HEK293 (cell line): ENCODE measurements at regions of chr18 and their contacts with region 1.

Region 1: GRCh38 chr18:23703057-23703986 is 14.1 kb downstream of the LAMA3 start:
- H3K4me3 ChIP-seq: no peak overlapping the region
- H3K27ac ChIP-seq: no peak overlapping the region
- H3K4me1 ChIP-seq: no peaks in the 10 kb centered on the region
- CTCF ChIP-seq: peak; percentile 65; the same call in 1 of the 2 replicates

Region 2: DNA sequence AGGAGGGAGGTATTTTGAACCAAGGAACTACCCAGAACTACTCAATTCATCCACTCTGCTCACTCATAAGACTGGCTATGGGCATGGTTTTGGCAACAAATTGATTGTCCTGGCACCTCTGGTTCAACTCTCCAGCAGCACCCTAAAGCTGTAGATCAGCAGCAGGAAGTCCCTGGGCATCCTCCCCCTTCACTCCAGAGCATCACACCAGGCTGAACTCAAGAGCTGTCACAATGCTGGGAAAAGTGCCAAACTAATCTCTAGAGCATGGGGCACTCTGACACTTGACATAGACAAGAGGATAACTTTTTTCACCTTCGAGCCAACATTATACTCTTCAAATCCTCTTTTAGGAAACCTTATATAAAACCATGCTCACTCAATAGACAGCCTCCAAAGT is 924.3 kb before region 1 on chr18:
- CTCF ChIA-PET with region 1: interaction called, 3 read pairs
- POLR2A ChIA-PET with region 1: interaction called, 10 read pairs
- H3K4me3 ChIP-seq: no peak overlapping the region
- H3K27ac ChIP-seq: no peak overlapping the region
- H3K4me1 ChIP-seq: peaks cover 4% of the 10 kb centered on the region; the same call in 1 of the 2 replicates
- CTCF ChIP-seq: no peak

Region 3: GRCh38 chr18:23515911-23516546 is 187.3 kb before region 1 on chr18:
- CTCF ChIA-PET with region 1: interaction called, 35 read pairs
- POLR2A ChIA-PET with region 1: no interaction called
- H3K4me3 ChIP-seq: no peak overlapping the region
- H3K27ac ChIP-seq: no peak overlapping the region
- H3K4me1 ChIP-seq: no peaks in the 10 kb centered on the region
- CTCF ChIP-seq: peak; percentile 62

Region 4: GRCh38 chr18:23629444-23629946 is 73.8 kb before region 1 on chr18:
- CTCF ChIA-PET with region 1: interaction called, 122 read pairs
- POLR2A ChIA-PET with region 1: no interaction called
- H3K4me3 ChIP-seq: no peak overlapping the region
- H3K27ac ChIP-seq: peak overlapping the region; percentile 29; the same call in 1 of the 2 replicates
- H3K4me1 ChIP-seq: peaks cover 34% of the 10 kb centered on the region
- CTCF ChIP-seq: no peak

Region 5: GRCh38 chr18:23812546-23813440 is 109.5 kb after region 1 on chr18:
- CTCF ChIA-PET with region 1: interaction called, 12 read pairs
- POLR2A ChIA-PET with region 1: no interaction called
- H3K4me3 ChIP-seq: no peak overlapping the region
- H3K27ac ChIP-seq: no peak overlapping the region
- H3K4me1 ChIP-seq: no peaks in the 10 kb centered on the region
- CTCF ChIP-seq: no peak